ENCODE measurements at regions of chr1 and their contacts with region 1.

Region 1: GRCh38 chr1:65148548-65149350 is 746 bp downstream of the AK4 start:
- DNase-seq: peak; percentile 78
- ATAC-seq: peak; percentile 75

Region 2: GRCh38 chr1:65182658-65183268 is 34.0 kb after region 1 on chr1:
- intact Hi-C with region 1: loop called (anchors 5 kb)
- DNase-seq: no peak
- ATAC-seq: no peak

Region 3: GRCh38 chr1:65193129-65193695 is 44.5 kb after region 1 on chr1:
- intact Hi-C with region 1: no loop called
- DNase-seq: no peak
- ATAC-seq: no peak

Region 4: GRCh38 chr1:65467536-65467935 is 318.8 kb after region 1 on chr1:
- intact Hi-C with region 1: no loop called
- DNase-seq: peak; percentile 59
- ATAC-seq: no peak